ENCODE measurements at regions of chr7 and their contacts with region 1.

Region 1: DNA sequence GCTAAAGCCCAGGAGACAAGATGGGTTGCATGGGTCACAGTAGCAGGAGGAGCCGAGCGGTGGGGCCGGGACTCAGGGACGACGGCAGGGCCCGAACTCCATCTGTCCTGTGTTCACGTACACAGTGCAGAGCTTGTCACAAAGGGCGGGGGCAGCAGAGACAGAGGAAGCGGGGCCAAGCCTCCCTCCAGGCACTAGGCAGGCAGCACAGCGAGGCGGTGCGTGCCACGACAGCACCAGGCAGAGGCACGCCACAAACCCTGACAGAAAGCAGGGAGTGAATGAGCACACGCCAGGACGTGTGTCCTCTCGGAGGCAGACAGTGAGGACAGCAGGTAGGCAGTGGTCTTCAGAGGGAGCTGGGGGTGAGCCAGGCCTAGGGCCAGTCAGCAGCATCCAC is 177.8 kb downstream of the MAD1L1 start:
- DNase-seq: no peak
- ATAC-seq: no peak
- H3K4me3 ChIP-seq: no peak overlapping the region
- H3K27ac ChIP-seq: no peak overlapping the region
- H3K4me1 ChIP-seq: no peaks in the 10 kb centered on the region
- H3K27me3 ChIP-seq: no peaks in the 10 kb centered on the region
- CTCF ChIP-seq: no peak

Region 2: DNA sequence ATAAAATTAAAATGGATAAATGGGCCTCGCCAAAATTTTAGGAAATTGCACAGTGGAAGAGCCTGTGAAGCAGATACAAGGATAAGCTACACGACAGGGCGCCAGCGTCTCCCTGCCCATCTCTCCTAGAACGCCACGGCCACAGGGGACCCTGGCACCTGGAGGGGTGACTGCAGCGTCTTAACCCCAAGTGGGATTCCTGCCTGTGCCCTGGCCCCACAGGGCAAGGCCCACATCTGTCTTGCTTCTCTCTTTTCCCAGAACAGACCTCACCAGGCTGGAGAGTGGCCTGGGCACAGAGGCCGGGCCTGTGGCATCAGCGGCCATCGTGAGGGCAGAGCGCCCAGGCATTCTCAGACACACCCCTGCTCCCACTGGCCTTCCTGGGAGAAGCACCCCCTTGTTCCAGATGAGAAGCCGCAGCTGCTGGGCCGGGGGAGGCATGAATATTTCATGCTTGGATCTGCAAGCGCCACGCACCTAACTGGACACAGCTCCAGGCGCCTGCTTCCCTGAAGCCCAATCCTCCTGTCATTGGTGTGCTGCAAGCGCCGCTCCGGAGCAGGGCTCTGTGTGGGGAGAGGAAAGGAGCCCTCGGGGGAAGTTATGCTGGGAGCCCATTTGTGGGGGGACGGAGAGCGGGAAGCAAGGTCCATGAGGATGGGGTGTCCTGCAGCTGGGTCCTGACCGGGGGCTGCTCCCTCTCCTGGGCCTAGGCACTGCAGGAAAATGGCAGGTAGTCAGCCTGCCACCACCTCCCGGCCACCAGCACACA is 231.4 kb before region 1 on chr7:
- CTCF ChIA-PET with region 1: no interaction called
- POLR2A ChIA-PET with region 1: no interaction called
- intact Hi-C with region 1: loop called (anchors 5 kb)
- DNase-seq: no peak
- ATAC-seq: no peak
- H3K4me3 ChIP-seq: no peak overlapping the region
- H3K27ac ChIP-seq: no peak overlapping the region
- H3K4me1 ChIP-seq: no peaks in the 10 kb centered on the region
- H3K27me3 ChIP-seq: no peaks in the 10 kb centered on the region
- CTCF ChIP-seq: no peak

Region 3: GRCh38 chr7:1842321-1843221 is 212.4 kb before region 1 on chr7:
- CTCF ChIA-PET with region 1: no interaction called
- POLR2A ChIA-PET with region 1: no interaction called
- intact Hi-C with region 1: no loop called
- DNase-seq: no peak
- ATAC-seq: no peak
- H3K4me3 ChIP-seq: no peak overlapping the region
- H3K27ac ChIP-seq: no peak overlapping the region
- H3K4me1 ChIP-seq: no peaks in the 10 kb centered on the region
- H3K27me3 ChIP-seq: no peaks in the 10 kb centered on the region
- CTCF ChIP-seq: no peak

Region 4: GRCh38 chr7:2004841-2005725 is 49.8 kb before region 1 on chr7:
- CTCF ChIA-PET with region 1: no interaction called
- POLR2A ChIA-PET with region 1: no interaction called
- intact Hi-C with region 1: no loop called
- DNase-seq: no peak
- ATAC-seq: no peak
- H3K4me3 ChIP-seq: no peak overlapping the region
- H3K27ac ChIP-seq: no peak overlapping the region
- H3K4me1 ChIP-seq: no peaks in the 10 kb centered on the region
- H3K27me3 ChIP-seq: no peaks in the 10 kb centered on the region
- CTCF ChIP-seq: no peak

Measured in PC-3 (cell line).